GM12878 (cell line): ENCODE measurements at regions of chr17 and their contacts with region 1.

Region 1: DNA sequence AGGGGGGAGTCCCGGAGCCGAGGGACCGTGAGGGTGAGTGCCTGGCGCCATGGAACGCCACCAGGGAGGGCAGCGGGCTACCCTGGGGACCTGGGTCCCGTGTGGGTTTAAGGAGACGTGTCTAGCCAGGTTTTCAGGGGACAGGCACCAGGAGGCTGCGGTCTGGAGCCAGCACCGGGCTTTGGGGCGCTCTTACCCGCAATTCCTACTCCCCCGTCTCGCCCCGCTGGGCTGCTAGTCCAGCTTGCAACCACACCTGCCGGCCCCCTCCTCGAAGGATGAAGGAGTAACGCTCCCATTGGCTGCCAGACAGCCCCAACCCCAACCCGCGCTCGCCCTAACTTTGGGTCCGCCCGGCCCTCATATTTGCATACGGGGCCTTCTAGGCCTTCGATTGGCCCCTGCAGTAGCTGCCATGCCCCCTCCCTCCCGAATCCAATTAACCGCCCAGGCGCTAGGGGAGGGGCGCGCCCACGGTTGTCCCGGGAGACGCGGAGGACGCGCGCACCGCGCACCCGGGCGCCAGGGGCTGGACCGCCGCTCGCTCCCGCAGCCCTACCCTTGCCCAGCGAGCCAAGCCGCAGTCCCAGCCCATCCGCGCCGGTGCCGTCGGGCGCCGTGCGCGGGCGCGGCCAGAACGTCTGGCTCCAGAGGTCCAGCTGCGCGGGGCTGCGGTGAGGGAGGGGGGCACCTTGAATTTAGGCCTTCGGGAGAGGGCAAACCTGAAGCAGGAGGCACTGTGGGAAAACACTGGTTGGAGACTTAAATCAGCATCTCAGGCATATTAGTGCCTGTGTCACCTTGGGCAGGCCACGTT is at the start of gene TTLL6:
- DNase-seq: no peak
- ATAC-seq: peak; percentile 97
- H3K4me3 ChIP-seq: peak within 1 kb of the TSS; percentile 58
- H3K27ac ChIP-seq: no peak within 1 kb of the TSS
- H3K4me1 ChIP-seq: peaks cover 12% of the 10 kb centered on the region
- H3K27me3 ChIP-seq: peaks cover 0 to 6% of the 10 kb centered on the region in 2 experiments; a peak in 1 of 4 replicates
- CTCF ChIP-seq: no peak
- EP300 ChIP-seq: no peak
- POLR2A ChIP-seq: no peak
- RAD21 ChIP-seq: no peak
- polyA plus RNA-seq, gene TTLL6: not detected

Region 2: DNA sequence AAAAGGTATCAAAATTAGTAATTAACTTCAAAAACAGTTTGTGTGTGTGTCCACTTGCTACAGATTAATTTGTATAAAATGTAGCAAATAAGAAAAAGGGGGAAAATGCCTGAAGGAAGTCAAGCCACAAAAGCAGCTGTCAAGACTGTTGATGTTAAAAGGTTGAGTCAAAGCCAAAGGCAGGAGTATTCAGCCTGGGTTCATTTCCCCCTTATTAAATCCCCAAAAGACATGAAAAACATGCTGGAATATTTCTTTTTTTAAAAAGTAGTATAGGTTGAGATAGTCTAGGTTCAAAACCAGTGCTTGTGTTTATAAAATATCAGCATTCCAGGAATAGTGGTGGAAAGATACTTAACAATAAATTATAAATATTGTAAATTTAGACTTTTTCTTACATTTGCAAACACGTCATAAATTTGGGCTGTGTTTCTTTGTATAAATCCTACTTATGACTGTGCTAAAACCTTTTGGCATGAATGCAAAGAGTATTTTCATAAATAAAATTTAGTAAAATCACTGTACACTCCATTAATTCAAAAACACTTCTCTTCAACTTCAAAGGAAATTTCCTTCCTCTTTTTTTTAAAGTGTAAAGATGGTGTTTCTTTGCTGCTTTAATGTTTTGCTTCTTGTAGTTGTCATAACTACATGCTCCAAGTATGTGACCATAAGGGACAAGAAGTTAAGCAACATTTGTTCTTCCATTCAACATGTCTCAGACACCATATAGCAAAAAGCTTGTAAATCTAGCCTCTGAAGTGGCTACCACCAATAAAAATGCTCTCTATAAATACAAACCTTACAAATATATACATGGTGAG is 459.0 kb before region 1 on chr17:
- CTCF ChIA-PET with region 1: no interaction called
- POLR2A ChIA-PET with region 1: no interaction called
- RAD21 ChIA-PET with region 1: no interaction called
- SMC1A ChIA-PET with region 1: no interaction called
- in situ Hi-C with region 1: no loop called
- intact Hi-C with region 1: no loop called
- DNase-seq: no peak
- ATAC-seq: no peak; the same call in 2 of the 3 replicates
- H3K4me3 ChIP-seq: no peak overlapping the region
- H3K27ac ChIP-seq: no peak overlapping the region
- H3K4me1 ChIP-seq: no peaks in the 10 kb centered on the region
- H3K27me3 ChIP-seq: no peaks in the 10 kb centered on the region
- CTCF ChIP-seq: no peak
- EP300 ChIP-seq: no peak
- POLR2A ChIP-seq: no peak
- RAD21 ChIP-seq: no peak

Region 3: DNA sequence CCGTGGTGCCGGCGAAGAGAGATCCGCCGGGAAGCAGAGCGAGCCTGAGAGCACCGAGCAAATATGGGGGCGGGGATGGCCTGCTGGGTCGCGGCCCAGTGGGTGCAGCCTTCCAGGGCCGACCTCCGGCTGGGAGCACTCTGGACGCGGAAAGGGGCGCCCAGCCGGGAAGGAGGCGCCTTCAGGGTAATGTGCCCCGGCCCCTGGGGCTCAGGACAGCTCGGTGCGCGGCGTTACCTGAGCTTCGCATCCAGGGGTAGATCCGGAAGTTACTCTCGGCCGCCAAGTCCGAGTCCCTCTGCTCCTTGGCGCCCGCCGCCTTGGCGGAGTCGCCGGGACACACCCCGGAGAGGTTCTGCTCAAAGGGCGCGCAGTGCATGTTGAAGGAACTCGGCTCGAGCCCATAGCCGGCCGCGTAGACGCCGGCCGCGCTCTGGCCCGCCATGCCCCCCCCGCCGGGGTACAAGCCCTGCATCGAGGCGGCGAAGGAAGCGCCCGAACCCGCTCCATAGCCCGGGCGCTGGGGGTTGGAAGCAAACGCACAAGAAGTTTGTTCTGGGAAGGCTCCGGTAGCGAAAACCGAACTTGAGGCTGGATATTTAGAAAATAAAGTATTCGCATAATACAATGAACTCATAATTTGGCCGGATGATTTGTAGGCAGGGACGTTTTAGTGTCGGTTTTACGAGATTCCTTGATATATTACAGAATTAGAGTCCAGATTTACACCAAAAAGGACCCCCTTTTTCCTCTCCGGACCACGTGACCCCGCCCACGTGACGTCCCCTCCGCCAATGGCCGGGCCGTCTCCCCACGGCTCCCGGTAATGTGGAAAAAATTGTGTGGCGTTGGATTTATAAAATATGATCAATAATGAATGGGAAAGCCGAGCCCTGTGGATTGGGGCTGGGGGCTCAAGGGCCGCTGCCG is 206.4 kb before region 1 on chr17 and contains the start of gene HOXB7:
- CTCF ChIA-PET with region 1: no interaction called
- POLR2A ChIA-PET with region 1: no interaction called
- RAD21 ChIA-PET with region 1: no interaction called
- SMC1A ChIA-PET with region 1: no interaction called
- in situ Hi-C with region 1: no loop called
- intact Hi-C with region 1: no loop called
- DNase-seq: no peak
- ATAC-seq: peak; percentile 77
- H3K4me3 ChIP-seq: peak within 1 kb of the TSS; percentile 86
- H3K27ac ChIP-seq: peak within 1 kb of the TSS; percentile 1
- H3K4me1 ChIP-seq: peaks cover 11% of the 10 kb centered on the region
- H3K27me3 ChIP-seq: peaks cover 6 to 13% of the 10 kb centered on the region in 2 experiments; a peak in 3 of 4 replicates
- CTCF ChIP-seq: no peak
- EP300 ChIP-seq: no peak
- POLR2A ChIP-seq: peak; percentile 68; the same call in 1 of the 2 replicates
- RAD21 ChIP-seq: no peak
- polyA plus RNA-seq, gene HOXB7: 2.8 to 3.4 TPM

Region 4: DNA sequence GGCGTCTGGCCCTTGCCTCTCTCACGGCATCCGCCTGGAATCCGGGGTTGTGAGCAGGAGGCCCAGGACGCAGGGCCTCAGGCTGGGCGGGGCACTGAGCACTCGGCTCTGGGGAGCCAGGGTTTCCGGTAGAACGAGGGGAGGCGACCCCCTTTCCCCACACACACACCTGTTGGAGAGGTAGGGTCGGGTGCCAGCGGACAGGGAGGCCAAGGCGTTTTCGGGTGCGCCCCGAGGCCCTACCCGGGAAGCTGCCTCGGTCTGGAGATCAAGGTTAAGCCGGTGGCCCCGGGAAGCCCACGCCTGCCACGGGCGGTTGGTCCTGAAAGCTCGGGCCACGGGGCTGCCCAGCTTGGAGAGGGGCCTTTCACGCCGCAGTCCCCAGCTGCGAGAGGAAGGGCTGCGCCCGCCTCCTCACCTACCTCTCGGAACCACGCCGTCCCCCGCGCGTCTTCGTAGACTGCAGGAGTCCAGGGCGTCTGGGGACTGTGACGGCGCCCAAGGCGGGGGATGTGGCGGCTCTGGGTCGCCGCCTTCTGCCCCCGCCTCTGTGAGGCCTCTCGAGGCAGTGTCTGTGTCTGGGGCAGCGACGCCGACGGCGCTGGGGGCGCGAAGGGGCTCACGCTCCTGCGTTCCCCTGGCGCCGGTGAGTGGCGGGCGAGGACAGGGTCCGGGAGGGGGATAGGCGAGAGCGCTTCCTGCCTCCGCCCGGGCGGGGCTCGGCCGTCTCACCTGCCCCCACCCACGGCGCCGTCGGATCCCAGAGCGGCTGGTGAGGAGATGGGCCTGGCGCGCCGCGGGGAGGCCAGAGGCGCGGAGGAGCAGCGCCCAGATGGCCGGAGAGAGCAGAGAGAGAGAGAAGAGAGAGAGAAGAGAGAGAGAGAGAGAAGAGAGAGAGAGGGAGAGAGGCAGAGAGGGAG is 170.5 kb before region 1 on chr17:
- CTCF ChIA-PET with region 1: no interaction called
- POLR2A ChIA-PET with region 1: no interaction called
- RAD21 ChIA-PET with region 1: no interaction called
- SMC1A ChIA-PET with region 1: no interaction called
- in situ Hi-C with region 1: no loop called
- intact Hi-C with region 1: no loop called
- DNase-seq: no peak
- ATAC-seq: peak; percentile 82
- H3K4me3 ChIP-seq: peak overlapping the region; percentile 3; the same call in 1 of the 2 replicates
- H3K27ac ChIP-seq: no peak overlapping the region
- H3K4me1 ChIP-seq: peaks cover 7% of the 10 kb centered on the region
- H3K27me3 ChIP-seq: peaks cover 8 to 9% of the 10 kb centered on the region in 2 experiments
- CTCF ChIP-seq: no peak
- EP300 ChIP-seq: no peak
- POLR2A ChIP-seq: no peak
- RAD21 ChIP-seq: no peak

Region 5: DNA sequence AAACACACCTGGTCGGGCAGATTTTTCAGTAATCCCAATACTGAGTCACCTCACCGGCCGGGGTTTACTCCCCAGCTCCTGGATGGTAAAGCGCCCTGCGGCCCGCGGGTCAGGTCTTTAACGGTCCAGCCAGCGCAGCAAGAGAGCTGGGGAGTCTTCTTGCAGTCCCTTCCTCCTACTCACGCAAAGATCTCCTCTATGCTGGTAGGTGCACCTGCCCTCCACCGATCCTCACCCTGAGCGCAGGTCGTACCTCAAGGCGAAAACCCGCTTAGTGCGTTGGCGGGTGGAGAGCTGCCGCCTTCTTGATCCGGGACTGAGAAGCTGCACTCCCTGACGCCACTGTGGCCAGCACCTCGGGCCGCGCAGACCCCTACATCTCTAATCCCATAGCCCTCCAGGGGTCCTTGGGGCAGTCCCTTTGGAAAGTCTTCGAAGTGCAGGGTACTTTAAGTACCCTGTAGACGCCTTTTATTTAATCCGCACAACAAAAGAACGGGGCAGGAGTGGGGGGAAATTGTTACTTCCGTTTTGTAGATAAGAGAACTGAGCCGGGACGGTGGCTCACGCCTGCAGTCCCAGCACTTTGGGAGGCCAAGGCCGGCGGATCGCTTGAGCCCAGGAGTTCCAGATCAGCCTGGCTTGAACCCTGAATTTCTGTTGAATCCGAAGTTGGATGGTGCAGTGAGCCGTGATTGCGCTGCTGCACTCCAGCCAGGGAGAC is 78.0 kb before region 1 on chr17:
- CTCF ChIA-PET with region 1: no interaction called
- POLR2A ChIA-PET with region 1: no interaction called
- RAD21 ChIA-PET with region 1: no interaction called
- SMC1A ChIA-PET with region 1: no interaction called
- in situ Hi-C with region 1: no loop called
- intact Hi-C with region 1: no loop called
- DNase-seq: no peak
- ATAC-seq: no peak
- H3K4me3 ChIP-seq: no peak overlapping the region
- H3K27ac ChIP-seq: no peak overlapping the region
- H3K4me1 ChIP-seq: no peaks in the 10 kb centered on the region
- H3K27me3 ChIP-seq: peaks cover 20 to 44% of the 10 kb centered on the region in 2 experiments
- CTCF ChIP-seq: no peak
- EP300 ChIP-seq: no peak
- POLR2A ChIP-seq: no peak
- RAD21 ChIP-seq: no peak

Region 6: DNA sequence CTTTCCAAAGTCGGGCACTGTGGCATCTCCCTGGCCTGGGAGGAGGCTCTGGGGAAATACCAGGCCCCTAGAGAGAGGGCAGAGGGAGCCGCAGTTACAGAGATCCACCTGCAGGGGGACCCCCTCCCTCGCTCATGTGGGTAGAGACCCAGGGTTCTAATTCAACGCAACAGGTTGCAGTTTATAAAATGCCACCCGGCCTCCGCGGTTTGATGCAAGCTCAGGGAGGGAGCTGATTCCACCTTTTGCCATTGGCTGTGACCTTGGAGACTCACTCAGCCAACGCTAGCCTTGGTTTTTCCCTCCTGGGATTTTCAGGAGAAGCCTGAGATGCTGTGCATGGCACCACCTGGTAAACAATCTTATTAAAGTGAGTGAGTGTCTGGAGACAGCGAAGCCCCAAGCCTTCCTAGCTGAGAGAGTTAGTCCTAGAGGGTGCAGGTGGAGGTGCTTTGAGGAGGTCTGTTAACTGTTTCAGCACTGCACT is 12.0 kb before region 1 on chr17:
- CTCF ChIA-PET with region 1: interaction called, 26 read pairs
- POLR2A ChIA-PET with region 1: no interaction called
- RAD21 ChIA-PET with region 1: interaction called, 8 read pairs
- SMC1A ChIA-PET with region 1: interaction called, 9 read pairs
- in situ Hi-C with region 1: no loop called
- intact Hi-C with region 1: no loop called
- DNase-seq: no peak
- ATAC-seq: peak; percentile 98
- H3K4me3 ChIP-seq: no peak overlapping the region
- H3K27ac ChIP-seq: no peak overlapping the region
- H3K4me1 ChIP-seq: no peaks in the 10 kb centered on the region
- H3K27me3 ChIP-seq: no peaks in the 10 kb centered on the region; a peak in 2 of 4 replicates
- CTCF ChIP-seq: peak; percentile 89 to 95 (median 90)
- EP300 ChIP-seq: no peak
- POLR2A ChIP-seq: no peak
- RAD21 ChIP-seq: peak; percentile 93

Region 7: DNA sequence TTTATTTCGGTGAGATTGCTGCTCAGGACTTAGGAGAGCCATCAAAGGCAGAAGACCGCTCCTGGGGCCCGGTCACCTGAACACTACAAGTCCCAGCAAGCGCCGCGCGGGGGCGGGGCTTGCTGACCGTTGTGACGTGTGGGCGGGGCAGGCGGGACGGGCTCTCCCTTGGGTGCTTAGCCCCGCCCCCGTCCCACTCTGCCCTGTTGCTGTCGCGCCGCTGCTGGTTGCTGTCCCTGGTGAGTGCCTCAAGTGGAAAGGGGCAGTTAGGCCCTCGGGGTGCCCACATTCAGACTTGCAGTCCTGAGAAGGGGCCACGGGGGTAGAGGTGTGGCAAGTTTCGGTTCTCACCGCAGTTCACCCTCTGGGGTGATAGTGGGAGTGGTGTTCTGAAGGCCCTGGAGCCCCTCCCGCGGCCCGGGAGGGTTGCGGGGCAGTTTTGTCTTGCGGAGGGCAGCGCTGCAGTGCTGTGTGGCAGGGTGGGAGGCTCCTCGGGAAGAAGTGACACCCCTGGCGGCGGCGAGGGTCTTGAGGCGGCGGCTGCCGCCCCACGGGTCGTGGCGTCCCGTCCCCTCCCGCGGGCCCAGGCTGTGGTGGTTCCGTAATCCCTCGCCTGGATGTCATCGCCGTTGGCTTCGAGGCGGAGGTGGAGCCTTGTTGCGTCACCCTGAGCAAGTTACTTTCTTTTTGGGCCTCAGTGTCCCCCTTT is 14.0 kb after region 1 on chr17 and contains the start of gene CALCOCO2:
- CTCF ChIA-PET with region 1: interaction called, 132 read pairs
- POLR2A ChIA-PET with region 1: no interaction called
- RAD21 ChIA-PET with region 1: interaction called, 5 read pairs
- SMC1A ChIA-PET with region 1: interaction called, 16 read pairs
- in situ Hi-C with region 1: no loop called
- intact Hi-C with region 1: no loop called
- DNase-seq: peak; percentile 74
- ATAC-seq: peak; percentile 89
- H3K4me3 ChIP-seq: peak within 1 kb of the TSS; percentile 73
- H3K27ac ChIP-seq: peak within 1 kb of the TSS; percentile 85
- H3K4me1 ChIP-seq: peaks cover 20% of the 10 kb centered on the region
- H3K27me3 ChIP-seq: no peaks in the 10 kb centered on the region
- CTCF ChIP-seq: 0 out of 6 replicates have a peak, but pooled peaks of 1 of the 3 experiments have one; percentile 7
- EP300 ChIP-seq: no peak
- POLR2A ChIP-seq: peak; percentile 88
- RAD21 ChIP-seq: no peak
- polyA plus RNA-seq, gene CALCOCO2: 33.7 to 36.4 TPM

Region 8: GRCh38 chr17:48836004-48836403 is 19.0 kb after region 1 on chr17:
- CTCF ChIA-PET with region 1: interaction called, 132 read pairs
- POLR2A ChIA-PET with region 1: interaction called, 5 read pairs
- RAD21 ChIA-PET with region 1: interaction called, 5 read pairs
- SMC1A ChIA-PET with region 1: interaction called, 16 read pairs
- in situ Hi-C with region 1: no loop called
- intact Hi-C with region 1: no loop called
- DNase-seq: no peak
- ATAC-seq: peak; percentile 53
- H3K4me3 ChIP-seq: peak overlapping the region; percentile 46; the same call in 1 of the 2 replicates
- H3K27ac ChIP-seq: peak overlapping the region; percentile 53; the same call in 1 of the 2 replicates
- H3K4me1 ChIP-seq: peaks cover 53% of the 10 kb centered on the region
- H3K27me3 ChIP-seq: no peaks in the 10 kb centered on the region
- CTCF ChIP-seq: no peak
- EP300 ChIP-seq: no peak
- POLR2A ChIP-seq: no peak
- RAD21 ChIP-seq: no peak

Region 9: DNA sequence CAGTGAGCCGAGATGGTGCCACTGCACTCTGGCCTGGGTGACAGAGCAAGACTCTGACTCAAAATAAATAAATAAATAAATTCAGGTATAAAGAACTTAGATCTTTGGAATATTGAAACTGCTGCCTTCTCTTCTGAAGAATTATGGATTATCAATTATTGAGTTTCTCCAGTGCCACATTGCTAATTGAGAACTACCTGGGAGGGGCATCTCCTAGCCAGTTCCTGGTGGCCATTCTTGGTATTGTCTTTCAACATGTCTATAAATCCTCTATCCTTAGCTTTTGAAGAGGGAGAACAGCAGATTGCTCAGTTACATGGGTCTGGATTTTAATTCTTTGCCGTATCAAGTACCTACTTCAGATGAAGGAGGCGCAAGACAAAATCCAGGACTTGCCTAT is 43.1 kb after region 1 on chr17:
- CTCF ChIA-PET with region 1: interaction called, 11 read pairs
- POLR2A ChIA-PET with region 1: no interaction called
- RAD21 ChIA-PET with region 1: interaction called, 4 read pairs
- SMC1A ChIA-PET with region 1: interaction called, 7 read pairs
- in situ Hi-C with region 1: no loop called
- intact Hi-C with region 1: no loop called
- DNase-seq: no peak
- ATAC-seq: no peak
- H3K4me3 ChIP-seq: no peak overlapping the region
- H3K27ac ChIP-seq: no peak overlapping the region
- H3K4me1 ChIP-seq: no peaks in the 10 kb centered on the region
- H3K27me3 ChIP-seq: no peaks in the 10 kb centered on the region
- CTCF ChIP-seq: peak in 1 of 3 experiments; percentile 17; a peak in 1 of 6 replicates
- EP300 ChIP-seq: no peak
- POLR2A ChIP-seq: no peak
- RAD21 ChIP-seq: no peak

Region 10: DNA sequence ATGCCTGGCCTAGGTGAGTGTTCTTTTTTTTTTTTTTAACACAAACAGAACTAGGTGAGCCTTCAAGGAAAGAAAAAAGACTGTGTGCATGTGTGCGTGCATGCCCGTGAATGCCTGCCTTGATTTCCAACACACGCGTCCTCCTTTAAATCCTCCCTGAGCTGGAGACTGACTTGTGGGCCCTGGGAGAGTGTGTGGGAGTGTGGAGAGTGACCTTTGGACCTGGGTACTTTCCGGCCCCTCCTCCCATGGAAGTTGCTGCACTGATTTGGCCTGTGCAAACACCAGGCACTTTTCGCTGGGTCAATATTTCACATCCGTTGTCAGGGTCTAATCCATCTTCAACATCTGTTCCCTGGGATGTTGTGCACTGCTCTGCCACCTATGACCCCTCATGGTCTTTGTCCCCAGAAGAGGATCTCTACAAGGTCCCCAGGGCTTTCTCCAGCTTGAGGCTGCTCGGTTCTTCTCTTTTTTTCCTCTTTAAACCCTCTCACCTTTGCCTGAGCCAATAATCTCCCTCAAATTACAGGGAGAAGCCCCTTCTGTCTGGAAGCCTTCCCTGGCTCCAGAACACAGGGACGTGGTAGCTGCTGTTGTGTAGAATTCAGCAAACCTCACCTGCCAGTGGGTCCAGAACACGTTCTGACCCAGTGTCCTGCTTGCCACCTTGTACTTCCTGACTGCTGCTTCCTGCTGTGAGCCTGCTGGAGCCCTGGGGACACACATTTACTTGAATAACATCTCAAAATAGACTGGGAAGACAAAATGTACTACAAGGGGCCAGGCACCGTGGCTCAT is 54.8 kb after region 1 on chr17:
- CTCF ChIA-PET with region 1: interaction called, 490 read pairs
- POLR2A ChIA-PET with region 1: interaction called, 4 read pairs
- RAD21 ChIA-PET with region 1: interaction called, 376 read pairs
- SMC1A ChIA-PET with region 1: interaction called, 281 read pairs
- in situ Hi-C with region 1: loop called (anchors 5 kb)
- intact Hi-C with region 1: no loop called
- DNase-seq: no peak
- ATAC-seq: peak; percentile 59
- H3K4me3 ChIP-seq: no peak overlapping the region
- H3K27ac ChIP-seq: no peak overlapping the region
- H3K4me1 ChIP-seq: peaks cover 1% of the 10 kb centered on the region; the same call in 1 of the 2 replicates
- H3K27me3 ChIP-seq: no peaks in the 10 kb centered on the region
- CTCF ChIP-seq: no peak
- EP300 ChIP-seq: no peak
- POLR2A ChIP-seq: no peak
- RAD21 ChIP-seq: no peak